CD8-positive, alpha-beta T cell (primary cell): ENCODE measurements at regions of chr9 and their contacts with region 1.

Region 1: DNA sequence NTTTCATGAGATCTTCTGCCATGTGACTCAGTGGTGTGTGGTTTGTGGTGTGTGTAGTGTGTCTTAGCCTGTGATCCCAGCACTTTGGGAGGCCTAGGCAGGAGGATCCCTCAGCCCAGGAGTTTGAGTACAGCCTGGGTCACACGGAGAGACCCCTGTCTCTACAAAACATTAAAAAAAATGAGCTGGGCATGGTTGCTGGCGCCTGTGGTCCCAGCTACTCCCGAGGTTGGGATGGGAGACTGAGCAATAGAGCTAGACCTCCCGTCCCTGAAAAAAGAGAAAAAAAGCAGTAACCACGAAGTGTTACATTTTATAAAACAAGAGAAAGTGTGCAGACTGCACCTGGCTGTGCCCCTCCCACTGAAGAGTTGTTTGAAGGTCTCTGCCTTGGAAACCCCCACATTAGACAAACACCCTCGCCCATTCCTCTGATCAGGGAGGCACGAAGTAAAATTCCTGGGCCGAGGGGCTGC is 21.2 kb upstream of the RNU6ATAC start:
- DNase-seq: peak in 3 of 9 experiments; percentile 63 to 84 (median 72)
- ATAC-seq: peak; percentile 81
- H3K4me3 ChIP-seq: no peak overlapping the region
- H3K4me3 Mint-ChIP-seq: peak overlapping the region; percentile 22
- H3K27ac ChIP-seq: peak overlapping the region; percentile 4 to 49
- H3K27ac Mint-ChIP-seq: peak overlapping the region; percentile 88
- H3K4me1 ChIP-seq: peaks cover 26% of the 10 kb centered on the region
- H3K4me1 Mint-ChIP-seq: peaks cover 33% of the 10 kb centered on the region
- H3K27me3 ChIP-seq: peaks cover 0 to 8% of the 10 kb centered on the region in 2 experiments
- H3K27me3 Mint-ChIP-seq: no peaks in the 10 kb centered on the region
- CTCF ChIP-seq: no peak

Region 2: DNA sequence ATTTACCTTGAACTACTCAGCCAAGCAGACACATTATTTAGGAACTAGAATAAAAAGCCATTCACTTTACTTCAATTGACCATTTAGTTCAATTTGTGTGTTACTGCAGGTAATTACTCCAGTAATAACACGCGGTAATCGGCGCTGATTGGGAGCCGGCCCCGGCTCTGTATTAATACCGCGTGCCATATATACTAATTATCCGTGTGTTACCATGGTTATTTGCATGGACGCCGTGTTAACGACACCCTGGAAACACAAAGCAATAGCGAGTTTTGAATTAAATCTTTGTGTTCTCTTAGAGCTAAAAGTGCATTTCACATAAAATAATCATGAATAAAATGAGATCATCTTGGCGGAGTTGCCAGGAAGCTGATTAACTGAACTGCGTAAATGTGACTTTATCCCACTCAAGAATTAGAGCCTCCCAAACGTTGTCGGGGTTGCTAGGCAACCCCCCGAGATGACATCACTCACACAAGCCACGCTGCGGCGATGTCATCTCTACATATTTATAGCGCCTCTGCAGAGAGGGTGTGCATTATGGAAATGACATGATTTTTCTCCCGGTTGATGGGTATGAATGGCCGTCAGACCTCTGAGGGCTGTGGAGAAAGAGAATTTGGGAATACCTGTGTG is 20.2 kb after region 1 on chr9:
- CTCF ChIA-PET with region 1: no interaction called
- POLR2A ChIA-PET with region 1: no interaction called
- intact Hi-C with region 1: no loop called
- DNase-seq: no peak
- ATAC-seq: no peak
- H3K4me3 ChIP-seq: no peak overlapping the region
- H3K4me3 Mint-ChIP-seq: no peak overlapping the region
- H3K27ac ChIP-seq: no peak overlapping the region
- H3K27ac Mint-ChIP-seq: no peak overlapping the region
- H3K4me1 ChIP-seq: no peaks in the 10 kb centered on the region
- H3K4me1 Mint-ChIP-seq: no peaks in the 10 kb centered on the region
- H3K27me3 ChIP-seq: no peaks in the 10 kb centered on the region
- H3K27me3 Mint-ChIP-seq: no peaks in the 10 kb centered on the region
- CTCF ChIP-seq: no peak

Region 3: DNA sequence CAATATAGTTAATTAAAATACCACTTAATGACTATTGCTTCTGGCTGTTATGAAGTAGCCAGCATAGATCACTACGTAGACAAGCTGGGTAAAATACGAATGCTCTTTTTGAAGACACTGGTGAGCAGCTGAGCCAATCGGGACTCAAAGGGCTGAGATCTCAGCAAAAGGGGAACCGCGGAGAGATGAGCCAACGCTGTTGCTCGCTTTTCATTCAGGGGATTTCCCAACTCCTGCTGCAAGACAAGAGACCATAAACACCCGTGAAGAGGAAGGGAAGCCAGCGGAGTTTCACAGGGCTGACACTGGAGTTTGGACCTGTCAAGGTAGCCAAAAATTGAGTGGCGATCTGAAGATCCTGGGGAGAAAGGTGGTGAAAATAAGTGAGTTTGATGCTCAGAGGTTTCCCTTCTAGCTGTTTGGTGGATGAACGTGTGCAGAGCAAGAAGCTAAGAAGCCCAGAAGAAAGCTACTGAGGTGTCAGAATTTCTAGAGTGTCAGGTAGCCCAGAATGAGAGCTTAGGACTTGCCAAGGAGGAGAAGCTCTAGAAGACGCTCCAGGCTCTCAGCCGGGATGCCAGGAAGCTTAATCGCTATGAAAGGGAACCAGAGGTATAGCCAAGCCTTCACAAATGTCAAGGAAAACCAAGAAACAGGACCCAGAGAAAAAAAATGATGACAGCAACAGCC is 58.3 kb after region 1 on chr9:
- CTCF ChIA-PET with region 1: no interaction called
- POLR2A ChIA-PET with region 1: no interaction called
- intact Hi-C with region 1: loop called in 1 of 2 experiments (anchors 5 kb)
- DNase-seq: peak in 6 of 9 experiments; percentile 7 to 77 (median 40)
- ATAC-seq: peak; percentile 94
- H3K4me3 ChIP-seq: no peak overlapping the region
- H3K4me3 Mint-ChIP-seq: peak overlapping the region; percentile 47
- H3K27ac ChIP-seq: no peak overlapping the region
- H3K27ac Mint-ChIP-seq: peak overlapping the region; percentile 12
- H3K4me1 ChIP-seq: no peaks in the 10 kb centered on the region
- H3K4me1 Mint-ChIP-seq: peaks cover 12% of the 10 kb centered on the region
- H3K27me3 ChIP-seq: no peaks in the 10 kb centered on the region
- H3K27me3 Mint-ChIP-seq: no peaks in the 10 kb centered on the region
- CTCF ChIP-seq: no peak